Heart left ventricle (tissue), 16 donors: ENCODE measurements at regions of chr7 and their contacts with region 1.

Region 1: DNA sequence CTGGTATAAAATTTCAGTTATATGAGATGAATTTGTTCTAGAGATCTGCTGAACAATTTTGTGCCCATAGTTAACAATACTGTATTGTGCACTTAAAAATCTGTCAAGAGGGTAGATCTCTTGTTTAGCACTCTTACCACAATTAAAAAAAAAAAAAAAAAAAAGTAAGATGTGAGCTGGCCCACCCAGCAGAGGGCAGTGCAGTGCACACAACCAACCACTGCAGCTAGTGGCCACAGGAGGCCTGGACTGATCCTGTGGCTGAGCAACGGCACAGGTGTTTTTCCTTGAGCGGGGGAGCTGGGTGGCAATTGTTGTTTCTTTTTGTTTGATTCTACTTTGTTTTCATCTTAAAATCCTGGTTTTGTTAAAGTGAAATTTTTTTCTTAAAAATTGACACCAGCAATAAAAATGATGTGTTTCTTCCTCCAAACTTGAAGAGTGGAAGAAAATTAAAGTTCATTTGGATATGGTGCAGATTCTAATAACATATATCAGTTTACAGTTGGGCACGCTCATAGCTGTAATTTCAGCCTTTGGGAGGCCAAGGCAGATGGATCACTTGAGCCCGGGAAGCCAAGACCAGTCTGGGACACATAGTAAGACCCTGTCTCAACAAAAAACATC is 171.1 kb upstream of the TBX20 start:
- DNase-seq: peak; percentile 55 to 79 (median 65)
- ATAC-seq: peak; percentile 55 to 77 (median 72)
- H3K4me3 ChIP-seq: no peak overlapping the region
- H3K27ac ChIP-seq: no peak overlapping the region
- H3K4me1 ChIP-seq: peaks cover 0 to 13% (median 2%) of the 10 kb centered on the region in 12 donors
- H3K27me3 ChIP-seq: peaks cover 0 to 3% (median 0%) of the 10 kb centered on the region in 9 donors
- CTCF ChIP-seq: peak; percentile 64 to 79 (median 70)
- POLR2A ChIP-seq: no peak

Region 2: GRCh38 chr7:35356495-35356894 is 68.5 kb before region 1 on chr7:
- intact Hi-C with region 1: no loop called
- DNase-seq: peak in 3 of 5 donors; percentile 30 to 58 (median 44)
- ATAC-seq: peak; percentile 71 to 92 (median 90)
- H3K4me3 ChIP-seq: no peak overlapping the region
- H3K27ac ChIP-seq: peak overlapping the region in 1 of 12 donors; percentile 15
- H3K4me1 ChIP-seq: peaks cover 0 to 9% (median 0%) of the 10 kb centered on the region in 12 donors
- H3K27me3 ChIP-seq: no peaks in the 10 kb centered on the region
- CTCF ChIP-seq: no peak
- POLR2A ChIP-seq: no peak

Region 3: DNA sequence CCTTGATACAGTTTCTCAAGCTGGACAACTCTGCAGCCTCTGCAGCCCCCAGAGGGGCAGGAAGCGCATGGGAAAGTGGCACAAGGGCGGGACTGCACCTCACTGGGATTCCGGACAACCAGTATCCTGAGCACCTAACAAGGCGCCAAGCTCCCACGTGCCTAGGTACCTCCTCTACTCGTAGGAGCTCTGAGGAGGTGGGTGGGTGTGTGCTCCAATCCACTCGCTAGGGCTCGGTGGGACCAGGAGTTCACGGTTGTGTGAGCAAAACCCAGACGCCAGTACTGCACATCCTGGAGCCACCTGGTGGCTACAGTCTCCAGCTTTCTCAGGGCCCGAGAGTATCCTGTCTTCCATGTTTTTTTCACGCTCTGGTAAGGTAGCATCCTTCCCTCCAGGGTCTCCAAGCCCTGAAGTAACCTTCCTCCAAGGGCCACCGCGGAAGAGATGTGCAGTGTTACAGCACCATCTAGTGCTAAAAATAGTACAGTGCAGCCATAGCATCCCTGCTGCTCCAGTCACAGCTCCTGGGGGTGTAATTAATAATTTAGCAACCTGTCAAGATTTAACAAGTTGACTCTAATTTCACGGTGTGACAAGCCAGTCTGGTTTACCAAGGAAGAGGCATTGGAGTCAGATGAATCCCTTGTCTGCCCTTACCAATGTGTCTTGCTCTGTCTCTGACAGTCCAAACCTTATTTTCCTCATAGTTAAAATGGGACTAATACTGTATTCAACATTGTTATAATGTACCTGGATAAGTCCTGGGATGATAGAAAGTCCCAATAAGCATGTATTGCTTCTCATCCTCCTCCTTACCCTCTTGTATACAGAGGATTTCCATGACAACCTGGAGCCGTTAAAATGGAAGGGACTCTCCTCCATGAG is 199.6 kb after region 1 on chr7:
- intact Hi-C with region 1: loop called (anchors 2 to 10 kb)
- DNase-seq: peak in 3 of 5 donors; percentile 18 to 36 (median 25)
- ATAC-seq: peak; percentile 76 to 88 (median 84)
- H3K4me3 ChIP-seq: no peak overlapping the region
- H3K27ac ChIP-seq: no peak overlapping the region
- H3K4me1 ChIP-seq: peaks cover 0 to 9% (median 4%) of the 10 kb centered on the region in 12 donors
- H3K27me3 ChIP-seq: no peaks in the 10 kb centered on the region
- CTCF ChIP-seq: peak; percentile 72 to 89 (median 82)
- POLR2A ChIP-seq: no peak

Region 4: DNA sequence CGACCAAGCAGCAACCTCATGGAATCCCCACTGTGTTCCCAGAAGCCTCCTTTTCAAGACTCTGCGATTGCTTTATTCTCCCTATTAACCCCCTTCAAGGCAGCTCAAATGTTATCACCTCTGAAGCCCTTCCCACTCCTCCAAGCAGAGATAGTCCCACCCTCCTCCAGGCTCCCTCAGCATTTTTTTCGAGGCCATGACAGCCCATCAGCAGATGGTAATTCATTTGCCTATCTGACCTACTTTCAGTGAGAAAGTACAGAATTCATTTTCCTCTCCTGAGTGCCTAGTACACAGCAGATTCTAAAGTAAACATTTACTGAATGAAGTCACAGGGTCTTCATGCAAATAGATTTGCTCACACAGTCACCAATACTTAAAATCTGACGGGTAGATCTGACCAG is 222.2 kb after region 1 on chr7:
- intact Hi-C with region 1: no loop called
- DNase-seq: peak in 1 of 5 donors; percentile 41
- ATAC-seq: peak; percentile 53 to 79 (median 74)
- H3K4me3 ChIP-seq: peak overlapping the region in 2 of 12 donors; percentile 2 to 9
- H3K27ac ChIP-seq: peak overlapping the region; percentile 22 to 70 (median 54)
- H3K4me1 ChIP-seq: peaks cover 6 to 65% (median 40%) of the 10 kb centered on the region in 12 donors
- H3K27me3 ChIP-seq: no peaks in the 10 kb centered on the region
- CTCF ChIP-seq: no peak
- POLR2A ChIP-seq: no peak

Region 5: DNA sequence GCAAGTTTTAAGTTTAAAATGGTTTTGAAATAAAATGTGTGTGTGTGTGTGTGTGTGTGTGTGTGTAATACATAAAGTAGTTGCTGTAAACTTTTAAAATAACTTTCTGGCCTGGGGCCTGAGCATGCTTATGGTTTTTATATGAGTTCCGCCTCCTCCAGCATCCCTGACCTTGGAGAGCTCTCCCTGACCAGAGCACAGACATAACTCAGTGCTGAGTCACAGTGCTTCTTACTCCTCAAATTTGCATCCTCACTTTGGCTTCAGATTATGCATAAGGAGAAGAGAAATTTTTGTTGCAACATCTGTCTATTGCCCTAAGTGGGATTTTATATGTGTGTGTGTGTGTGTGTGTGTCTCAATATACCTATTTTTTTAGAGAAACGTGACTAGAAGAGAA is 1822.9 kb after region 1 on chr7:
- intact Hi-C with region 1: no loop called
- DNase-seq: no peak
- ATAC-seq: peak; percentile 45 to 87 (median 67)
- H3K4me3 ChIP-seq: no peak overlapping the region
- H3K27ac ChIP-seq: no peak overlapping the region
- H3K4me1 ChIP-seq: peaks cover 0 to 27% (median 0%) of the 10 kb centered on the region in 12 donors
- H3K27me3 ChIP-seq: no peaks in the 10 kb centered on the region
- CTCF ChIP-seq: no peak
- POLR2A ChIP-seq: no peak